ENCODE measurements at regions of chr1 and their contacts with region 1.

Region 1: DNA sequence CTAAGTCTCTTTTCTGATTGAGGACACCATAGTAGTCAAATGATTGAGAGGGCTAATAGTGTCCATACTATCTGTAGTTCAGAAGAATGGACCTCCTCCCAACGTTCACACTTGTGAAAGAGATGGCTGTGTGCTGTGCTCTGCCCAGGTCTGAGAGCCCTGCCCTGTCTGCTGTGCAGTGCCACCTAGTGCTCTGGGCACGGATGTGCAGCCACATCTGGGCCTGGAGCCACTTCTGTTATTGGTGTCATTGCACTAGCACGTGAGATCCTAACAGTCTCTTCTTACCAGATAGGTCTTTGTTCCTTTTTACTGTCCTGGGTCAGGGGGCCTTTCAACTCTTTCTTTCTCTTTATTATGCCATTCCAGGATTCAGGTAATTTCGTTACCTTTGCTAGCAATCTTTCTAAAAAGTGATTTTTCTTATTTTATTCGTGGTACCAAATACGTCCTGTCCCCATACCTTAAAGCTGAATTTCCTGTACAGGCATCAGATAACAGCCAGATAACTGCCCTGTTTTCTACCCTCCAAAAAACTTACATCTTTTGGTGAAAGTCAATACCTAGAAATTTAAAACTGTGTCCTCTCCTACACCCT is 21.7 kb downstream of the INTS3 start:
- DNase-seq: peak; percentile 81 to 91 (median 89)
- ATAC-seq: peak; percentile 87 to 94 (median 94)
- H3K4me3 ChIP-seq: no peak overlapping the region
- H3K27ac ChIP-seq: peak overlapping the region; percentile 33 to 78 (median 71)
- H3K4me1 ChIP-seq: peaks cover 14 to 62% (median 39%) of the 10 kb centered on the region in 12 donors
- H3K27me3 ChIP-seq: no peaks in the 10 kb centered on the region
- CTCF ChIP-seq: peak; percentile 89 to 98 (median 94)
- POLR2A ChIP-seq: no peak

Region 2: GRCh38 chr1:152745289-152745704 is 1004.2 kb before region 1 on chr1:
- intact Hi-C with region 1: no loop called
- DNase-seq: no peak
- ATAC-seq: no peak
- H3K4me3 ChIP-seq: no peak overlapping the region
- H3K27ac ChIP-seq: no peak overlapping the region
- H3K4me1 ChIP-seq: no peaks in the 10 kb centered on the region
- H3K27me3 ChIP-seq: peaks cover 0 to 7% (median 0%) of the 10 kb centered on the region in 9 donors
- CTCF ChIP-seq: no peak
- POLR2A ChIP-seq: no peak

Region 3: DNA sequence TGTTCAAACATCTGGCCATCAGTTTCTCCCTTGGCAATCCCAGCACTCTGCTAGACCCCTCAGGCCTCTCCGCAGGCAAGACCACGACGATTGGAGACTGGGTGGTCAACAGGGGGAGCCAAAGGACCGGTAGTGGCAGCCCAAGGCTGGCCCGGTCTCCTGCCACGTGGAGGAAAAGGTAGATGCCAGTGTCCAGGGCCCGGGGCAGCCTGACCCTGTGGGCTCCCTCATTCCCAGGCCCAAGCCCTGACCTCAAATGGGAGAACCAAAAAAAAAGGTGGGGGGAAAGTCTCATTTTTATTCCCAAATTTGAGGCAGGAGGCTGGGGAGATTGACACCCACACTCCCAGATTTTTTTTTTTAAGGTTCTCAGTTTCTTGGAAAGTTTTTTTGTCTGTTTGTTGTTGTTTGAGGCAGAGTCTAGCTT is 238.5 kb before region 1 on chr1:
- intact Hi-C with region 1: loop called in 1 of 10 experiments (anchors 5 kb)
- DNase-seq: peak; percentile 82 to 88 (median 84)
- ATAC-seq: peak; percentile 60 to 62 (median 60)
- H3K4me3 ChIP-seq: no peak overlapping the region
- H3K27ac ChIP-seq: no peak overlapping the region
- H3K4me1 ChIP-seq: peaks cover 0 to 32% (median 21%) of the 10 kb centered on the region in 12 donors
- H3K27me3 ChIP-seq: no peaks in the 10 kb centered on the region
- CTCF ChIP-seq: peak; percentile 81 to 97 (median 90)
- POLR2A ChIP-seq: no peak

Region 4: GRCh38 chr1:153677718-153678505 is 71.6 kb before region 1 on chr1:
- intact Hi-C with region 1: loop called in 9 of 10 experiments (anchors 1 to 5 kb)
- DNase-seq: peak in 4 of 5 donors; percentile 50 to 71 (median 52)
- ATAC-seq: peak; percentile 44 to 78 (median 67)
- H3K4me3 ChIP-seq: peak overlapping the region; percentile 35 to 76 (median 60)
- H3K27ac ChIP-seq: peak overlapping the region in 11 of 12 donors; percentile 3 to 83 (median 68)
- H3K4me1 ChIP-seq: peaks cover 0 to 26% (median 19%) of the 10 kb centered on the region in 12 donors
- H3K27me3 ChIP-seq: peaks cover 0 to 28% (median 7%) of the 10 kb centered on the region in 9 donors
- CTCF ChIP-seq: peak; percentile 82 to 96 (median 93)
- POLR2A ChIP-seq: no peak

Region 5: GRCh38 chr1:153727463-153728304 is 21.8 kb before region 1 on chr1 and contains the start of gene INTS3:
- intact Hi-C with region 1: loop called in 1 of 10 experiments (anchors 2 kb)
- DNase-seq: peak; percentile 100
- ATAC-seq: peak; percentile 99 to 100 (median 100)
- H3K4me3 ChIP-seq: peak within 1 kb of the TSS; percentile 44 to 98 (median 82)
- H3K27ac ChIP-seq: peak within 1 kb of the TSS; percentile 86 to 100 (median 98)
- H3K4me1 ChIP-seq: peaks cover 0 to 38% (median 22%) of the 10 kb centered on the region in 12 donors
- H3K27me3 ChIP-seq: no peaks in the 10 kb centered on the region
- CTCF ChIP-seq: peak in 3 of 12 donors; percentile 13 to 25 (median 14)
- POLR2A ChIP-seq: no peak
- total RNA-seq, gene INTS3: 19.6 to 33.2 (median 30.7) TPM

Region 6: DNA sequence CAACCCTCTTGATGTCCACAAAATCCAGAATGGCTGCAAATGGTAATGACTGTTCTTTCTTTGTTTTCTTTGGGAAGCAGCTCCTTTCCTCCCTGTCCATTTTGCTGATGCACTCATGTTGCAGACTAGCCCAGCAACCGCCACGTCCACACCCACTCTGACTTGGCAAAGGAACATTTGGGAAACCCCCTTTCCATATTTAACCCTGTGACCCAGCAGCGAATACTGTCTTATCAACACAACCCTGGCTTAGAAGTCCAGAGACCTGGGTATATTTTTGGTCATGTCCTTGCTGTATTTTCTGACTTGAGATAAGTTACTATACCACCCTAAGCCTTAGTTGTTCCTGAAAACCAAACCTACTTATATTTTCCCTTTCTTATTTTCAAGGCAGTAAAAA is 770.8 kb after region 1 on chr1:
- intact Hi-C with region 1: no loop called
- DNase-seq: peak in 3 of 5 donors; percentile 35 to 48 (median 42)
- ATAC-seq: peak; percentile 61 to 86 (median 79)
- H3K4me3 ChIP-seq: no peak overlapping the region
- H3K27ac ChIP-seq: peak overlapping the region in 5 of 12 donors; percentile 15 to 60 (median 30)
- H3K4me1 ChIP-seq: peaks cover 0 to 34% (median 20%) of the 10 kb centered on the region in 12 donors
- H3K27me3 ChIP-seq: no peaks in the 10 kb centered on the region
- CTCF ChIP-seq: no peak
- POLR2A ChIP-seq: no peak